Left colon (tissue), 2 donors: ENCODE measurements at regions of chr2 and their contacts with region 1.

Region 1: GRCh38 chr2:85428343-85428881 is 9.9 kb downstream of the SH2D6 start:
- DNase-seq: no peak
- ATAC-seq: peak; percentile 23

Region 2: DNA sequence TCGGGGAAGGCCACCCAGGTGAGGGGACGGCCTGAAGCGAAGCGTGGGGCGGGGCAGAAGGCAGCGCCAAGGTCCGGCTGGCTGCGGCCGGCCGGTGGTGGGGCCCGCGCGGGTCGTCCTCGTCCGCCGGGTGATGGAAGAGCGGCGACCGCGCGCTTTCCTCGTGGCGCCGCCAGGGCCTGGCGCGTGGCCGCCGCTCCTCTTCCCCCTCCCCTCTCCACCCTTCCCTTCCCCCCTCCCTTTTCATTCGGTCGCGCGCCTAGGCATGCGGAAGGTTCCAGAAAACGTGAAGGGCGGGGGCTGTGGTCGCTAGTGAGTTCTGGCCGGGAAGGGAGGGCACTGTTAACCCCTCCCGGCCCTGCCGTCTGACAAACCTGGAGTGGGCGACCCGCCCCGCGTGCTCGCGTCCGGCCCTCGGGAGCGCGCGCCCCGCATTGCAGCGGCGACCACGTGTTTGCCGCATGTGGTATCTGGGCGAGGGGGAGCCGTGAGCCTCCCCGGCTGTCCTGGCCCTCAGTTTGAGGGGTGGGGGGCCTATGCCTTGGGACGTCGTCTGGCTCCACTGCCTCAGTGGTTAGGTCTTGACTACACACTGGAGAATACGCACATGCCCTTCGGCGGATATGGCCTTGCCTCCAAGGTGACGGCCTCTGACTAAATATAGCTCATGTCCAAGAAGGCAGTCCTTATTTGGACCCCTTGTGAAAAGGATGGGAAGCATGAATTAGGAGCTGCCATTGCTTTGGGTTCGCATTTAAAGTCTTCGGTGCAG is 111.1 kb after region 1 on chr2:
- intact Hi-C with region 1: loop called in 1 of 2 experiments (anchors 5 kb)
- DNase-seq: peak; percentile 75 to 79
- ATAC-seq: peak; percentile 61